ENCODE measurements at regions of chr14 and their contacts with region 1.

Region 1: GRCh38 chr14:49862089-49862673 is 9.6 kb upstream of the NEMF start:
- DNase-seq: peak; percentile 88
- H3K4me3 Mint-ChIP-seq: no peak overlapping the region
- H3K27ac Mint-ChIP-seq: no peak overlapping the region
- H3K4me1 Mint-ChIP-seq: peaks cover 27% of the 10 kb centered on the region
- H3K27me3 Mint-ChIP-seq: no peaks in the 10 kb centered on the region

Region 2: GRCh38 chr14:49633640-49634546 is 228.3 kb before region 1 on chr14:
- CTCF ChIA-PET with region 1: interaction called, 20 read pairs
- POLR2A ChIA-PET with region 1: no interaction called
- DNase-seq: peak; percentile 95
- H3K4me3 Mint-ChIP-seq: peak overlapping the region; percentile 92
- H3K27ac Mint-ChIP-seq: peak overlapping the region; percentile 97
- H3K4me1 Mint-ChIP-seq: peaks cover 42% of the 10 kb centered on the region
- H3K27me3 Mint-ChIP-seq: no peaks in the 10 kb centered on the region

Region 3: GRCh38 chr14:49745191-49745590 is 117.0 kb before region 1 on chr14:
- CTCF ChIA-PET with region 1: no interaction called
- POLR2A ChIA-PET with region 1: no interaction called
- DNase-seq: no peak
- H3K4me3 Mint-ChIP-seq: no peak overlapping the region
- H3K27ac Mint-ChIP-seq: no peak overlapping the region
- H3K4me1 Mint-ChIP-seq: no peaks in the 10 kb centered on the region
- H3K27me3 Mint-ChIP-seq: no peaks in the 10 kb centered on the region

Region 4: GRCh38 chr14:49892636-49893308 is 30.6 kb after region 1 on chr14 and contains the start of gene ARF6:
- CTCF ChIA-PET with region 1: interaction called, 22 read pairs
- POLR2A ChIA-PET with region 1: interaction called, 3 read pairs
- DNase-seq: peak; percentile 97
- H3K4me3 Mint-ChIP-seq: peak within 1 kb of the TSS; percentile 97
- H3K27ac Mint-ChIP-seq: peak within 1 kb of the TSS; percentile 99
- H3K4me1 Mint-ChIP-seq: peaks cover 22% of the 10 kb centered on the region
- H3K27me3 Mint-ChIP-seq: no peaks in the 10 kb centered on the region
- total RNA-seq, gene ARF6: 160 to 165 TPM

Region 5: GRCh38 chr14:50003213-50004031 is 141.2 kb after region 1 on chr14:
- CTCF ChIA-PET with region 1: interaction called, 55 read pairs
- POLR2A ChIA-PET with region 1: interaction called, 17 read pairs
- DNase-seq: peak; percentile 88
- H3K4me3 Mint-ChIP-seq: peak overlapping the region; percentile 72
- H3K27ac Mint-ChIP-seq: peak overlapping the region; percentile 97
- H3K4me1 Mint-ChIP-seq: peaks cover 77% of the 10 kb centered on the region
- H3K27me3 Mint-ChIP-seq: no peaks in the 10 kb centered on the region

Region 6: DNA sequence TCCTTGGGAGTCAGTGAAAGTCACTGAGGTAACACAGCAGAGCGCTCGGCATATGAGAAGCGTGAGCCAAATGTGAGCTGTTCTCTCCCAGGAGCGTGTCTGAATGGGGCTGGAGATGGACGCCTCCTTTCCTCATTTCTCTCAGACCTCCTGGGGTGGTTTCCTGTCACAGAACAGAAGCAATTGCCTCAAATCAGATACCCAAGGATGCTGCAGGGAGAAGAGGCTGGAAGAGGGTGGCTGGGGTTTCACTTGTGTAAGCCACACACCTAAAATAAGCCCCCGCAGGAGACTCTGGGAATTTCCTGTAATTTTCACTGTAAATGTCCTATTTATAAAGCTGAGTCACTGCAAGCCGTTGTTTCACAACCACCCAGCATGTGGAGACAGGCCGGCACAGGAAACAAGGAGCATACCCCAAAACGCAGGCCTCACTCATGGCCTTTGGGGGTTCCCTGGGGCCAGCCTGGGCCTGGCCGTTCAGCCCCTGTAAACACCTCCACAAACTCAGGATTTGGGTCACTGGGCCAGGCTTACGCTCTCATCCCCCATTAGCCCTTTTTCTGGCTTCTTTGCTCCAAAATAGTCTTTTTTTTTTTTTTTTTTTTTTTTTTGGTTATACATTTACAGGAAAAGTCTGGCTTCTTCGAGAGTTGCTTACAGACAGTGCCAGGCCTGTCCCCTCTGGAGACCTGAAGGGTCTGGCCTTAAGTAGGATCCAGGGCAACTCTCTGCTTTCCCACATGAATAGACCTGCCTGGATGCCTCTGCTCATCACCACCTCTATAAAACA is 198.9 kb after region 1 on chr14:
- CTCF ChIA-PET with region 1: interaction called, 51 read pairs
- POLR2A ChIA-PET with region 1: interaction called, 17 read pairs
- DNase-seq: peak; percentile 48
- H3K4me3 Mint-ChIP-seq: peak overlapping the region; percentile 81
- H3K27ac Mint-ChIP-seq: peak overlapping the region; percentile 98
- H3K4me1 Mint-ChIP-seq: peaks cover 90% of the 10 kb centered on the region
- H3K27me3 Mint-ChIP-seq: no peaks in the 10 kb centered on the region

Region 7: DNA sequence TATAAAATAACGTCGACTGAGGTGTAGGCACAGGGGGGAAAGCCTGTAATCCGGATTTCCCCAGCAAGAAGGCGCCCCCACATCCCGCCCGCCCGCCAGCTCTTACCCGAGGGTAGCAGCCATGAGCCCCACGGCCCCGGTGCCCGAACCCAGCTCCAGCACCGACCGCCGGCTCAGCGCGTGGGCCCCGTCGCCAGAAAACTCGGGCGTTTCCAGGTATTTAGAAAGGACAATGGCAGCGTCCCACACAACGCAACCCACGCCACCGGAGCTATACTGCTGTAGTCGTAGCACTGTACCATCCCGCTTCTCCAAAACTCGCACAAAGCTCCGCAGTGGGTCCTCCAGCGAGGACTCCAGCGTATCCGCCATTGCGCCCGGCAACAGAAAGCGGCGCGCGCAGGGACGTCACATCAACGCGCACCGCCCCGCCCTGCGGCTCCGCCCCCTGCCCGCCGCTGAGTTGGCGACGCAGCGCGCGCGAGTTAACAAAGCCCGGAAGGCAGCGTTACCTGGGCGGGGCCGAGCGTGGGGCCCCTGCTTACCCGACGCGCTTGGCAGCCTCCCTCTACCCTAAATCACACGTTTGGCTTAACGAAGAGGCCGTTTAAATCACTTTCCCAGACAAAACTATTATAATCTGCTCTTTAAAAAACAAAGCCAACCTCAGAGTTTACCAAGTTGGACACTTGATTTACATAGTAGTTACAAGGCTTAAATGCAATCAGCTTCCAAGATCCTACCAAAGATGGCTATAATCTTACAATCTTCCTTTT is 254.2 kb after region 1 on chr14 and contains the start of gene VCPKMT:
- CTCF ChIA-PET with region 1: interaction called, 18 read pairs
- POLR2A ChIA-PET with region 1: no interaction called
- DNase-seq: peak; percentile 96
- H3K4me3 Mint-ChIP-seq: peak within 1 kb of the TSS; percentile 95
- H3K27ac Mint-ChIP-seq: peak within 1 kb of the TSS; percentile 98
- H3K4me1 Mint-ChIP-seq: peaks cover 28% of the 10 kb centered on the region
- H3K27me3 Mint-ChIP-seq: no peaks in the 10 kb centered on the region
- total RNA-seq, gene VCPKMT: 9.8 to 11.3 TPM

Measured in activated CD4-positive, alpha-beta T cell treated with anti-CD3 and anti-CD28 coated beads, Interleukin-2, amount 10 ng/mL, durations not matched to agents 7 days and 5 days (primary cell).